Activated CD4-positive, alpha-beta T cell treated with anti-CD3 and anti-CD28 coated beads for 36 hours (primary cell): ENCODE measurements at regions of chr1 and their contacts with region 1.

Region 1: DNA sequence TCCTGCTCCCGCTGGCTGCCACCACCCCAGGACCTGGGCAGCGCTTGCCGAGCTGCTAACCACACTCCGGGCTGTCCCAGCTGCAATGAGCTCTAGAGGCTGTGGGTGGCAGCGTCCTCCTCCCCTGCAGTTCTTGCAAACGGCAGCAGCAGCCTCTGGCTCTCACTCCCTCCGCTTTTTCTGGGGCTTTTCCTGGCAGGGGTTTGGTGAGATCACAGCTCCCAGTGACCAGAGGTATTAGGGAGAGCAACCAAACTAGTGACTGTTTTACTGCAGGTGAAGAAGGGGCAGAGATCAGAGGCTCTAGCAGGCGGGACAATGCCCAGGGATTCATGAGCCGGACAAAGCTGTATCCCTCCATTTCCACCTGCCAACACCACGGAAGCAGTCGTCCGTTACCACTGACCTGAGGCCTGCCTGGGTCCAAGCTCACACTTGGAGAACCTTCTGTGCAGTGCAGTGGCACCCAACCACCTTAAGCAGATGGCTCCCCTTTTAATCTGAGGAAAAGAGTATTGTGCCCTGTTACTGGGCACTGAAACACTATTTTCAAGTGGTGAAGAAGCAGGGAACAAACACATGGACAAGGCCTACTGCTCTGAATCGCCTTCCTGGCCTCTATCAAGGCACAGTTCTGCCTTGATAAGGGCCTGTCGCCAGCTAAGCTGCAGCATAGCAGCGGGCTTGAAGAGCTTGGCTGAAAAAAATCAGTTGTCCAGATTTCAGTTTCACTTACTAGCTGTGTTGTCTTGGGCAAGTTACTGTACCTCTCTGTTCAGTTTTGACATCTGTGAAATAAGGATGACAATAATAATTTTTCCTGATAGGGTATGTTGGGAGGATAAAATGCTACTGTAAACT is at the start of gene F5:
- DNase-seq: peak; percentile 92
- ATAC-seq: peak; percentile 87
- H3K4me3 Mint-ChIP-seq: peak within 1 kb of the TSS; percentile 95
- H3K27ac Mint-ChIP-seq: peak within 1 kb of the TSS; percentile 97
- H3K4me1 Mint-ChIP-seq: peaks cover 65% of the 10 kb centered on the region
- H3K27me3 Mint-ChIP-seq: no peaks in the 10 kb centered on the region
- total RNA-seq, gene F5: 49.8 to 57.8 TPM

Region 2: DNA sequence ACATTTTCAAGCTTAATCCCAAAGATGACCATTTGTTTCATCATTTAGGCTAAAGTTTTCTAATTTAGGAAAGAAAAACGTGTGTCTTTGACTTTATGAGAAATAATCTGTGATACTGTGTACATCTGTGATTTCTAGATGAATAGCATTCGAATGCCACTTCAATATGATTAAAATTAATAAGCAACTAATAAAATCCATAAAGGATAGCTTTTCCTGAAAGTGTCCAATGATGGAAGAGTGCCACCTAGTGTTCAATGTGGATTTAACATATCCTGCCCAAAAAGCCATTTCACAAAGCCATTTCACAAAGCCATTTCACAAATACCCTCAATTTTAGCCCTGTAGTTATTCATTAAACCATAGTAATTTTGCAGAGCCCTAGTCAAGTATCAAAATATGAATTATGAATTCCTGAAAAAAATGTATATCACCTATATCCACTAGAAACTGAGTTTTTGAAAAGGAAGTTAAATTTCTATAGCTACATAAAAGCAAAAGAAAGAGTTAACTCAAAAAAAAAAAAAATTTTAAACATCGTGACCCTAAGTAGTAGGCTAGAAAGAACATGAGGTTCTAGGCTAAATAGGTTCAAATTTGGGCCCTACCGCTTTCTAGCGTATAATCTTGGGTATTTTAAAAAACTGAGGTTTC is 238.1 kb before region 1 on chr1:
- CTCF ChIA-PET with region 1: no interaction called
- POLR2A ChIA-PET with region 1: no interaction called
- intact Hi-C with region 1: no loop called
- DNase-seq: no peak
- ATAC-seq: no peak
- H3K4me3 Mint-ChIP-seq: no peak overlapping the region
- H3K27ac Mint-ChIP-seq: no peak overlapping the region
- H3K4me1 Mint-ChIP-seq: peaks cover 14% of the 10 kb centered on the region
- H3K27me3 Mint-ChIP-seq: no peaks in the 10 kb centered on the region

Region 3: GRCh38 chr1:169601093-169601881 is 14.7 kb after region 1 on chr1:
- CTCF ChIA-PET with region 1: interaction called, 46 read pairs
- POLR2A ChIA-PET with region 1: no interaction called
- intact Hi-C with region 1: loop called in 1 of 2 experiments (anchors 2 kb)
- DNase-seq: no peak
- ATAC-seq: peak; percentile 38
- H3K4me3 Mint-ChIP-seq: no peak overlapping the region
- H3K27ac Mint-ChIP-seq: peak overlapping the region; percentile 72
- H3K4me1 Mint-ChIP-seq: peaks cover 56% of the 10 kb centered on the region
- H3K27me3 Mint-ChIP-seq: no peaks in the 10 kb centered on the region

Region 4: DNA sequence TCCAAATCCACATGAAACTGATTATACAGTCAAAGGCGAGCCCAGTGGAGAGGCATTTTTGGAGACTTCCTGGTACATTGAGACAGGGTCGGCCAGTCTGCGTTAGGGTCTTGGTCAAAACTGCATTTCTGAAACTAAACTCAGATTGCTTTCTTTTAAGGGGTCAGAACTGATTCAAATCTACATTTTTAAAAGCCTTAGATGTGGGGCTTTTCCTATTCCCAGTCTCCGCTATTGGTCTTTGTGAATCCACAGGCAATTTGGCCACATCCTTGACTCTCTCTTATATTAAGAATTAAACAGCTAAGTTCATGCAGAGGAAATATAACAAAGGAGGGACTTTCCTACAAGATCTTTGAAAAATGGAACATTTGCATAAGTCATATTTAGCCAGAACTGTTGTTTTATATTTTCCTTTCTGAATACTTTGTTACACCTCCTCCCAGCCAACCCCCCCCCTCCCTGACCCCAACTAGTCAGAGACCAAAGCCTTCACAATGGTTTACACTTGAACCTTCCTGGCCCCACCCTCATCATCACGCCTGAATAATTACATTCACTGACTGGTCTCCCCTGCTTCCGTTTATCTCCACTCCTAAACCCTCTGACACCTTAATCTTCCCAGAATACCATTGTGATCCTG is 93.9 kb after region 1 on chr1:
- CTCF ChIA-PET with region 1: interaction called, 12 read pairs
- POLR2A ChIA-PET with region 1: no interaction called
- intact Hi-C with region 1: no loop called
- DNase-seq: peak; percentile 80
- ATAC-seq: peak; percentile 84
- H3K4me3 Mint-ChIP-seq: peak overlapping the region; percentile 57
- H3K27ac Mint-ChIP-seq: peak overlapping the region; percentile 95
- H3K4me1 Mint-ChIP-seq: peaks cover 64% of the 10 kb centered on the region
- H3K27me3 Mint-ChIP-seq: no peaks in the 10 kb centered on the region

Region 5: GRCh38 chr1:169694304-169695075 is 107.9 kb after region 1 on chr1:
- CTCF ChIA-PET with region 1: interaction called, 15 read pairs
- POLR2A ChIA-PET with region 1: interaction called, 6 read pairs
- intact Hi-C with region 1: loop called (anchors 1 kb)
- DNase-seq: peak; percentile 52
- ATAC-seq: peak; percentile 26
- H3K4me3 Mint-ChIP-seq: peak overlapping the region; percentile 39
- H3K27ac Mint-ChIP-seq: peak overlapping the region; percentile 95
- H3K4me1 Mint-ChIP-seq: peaks cover 97% of the 10 kb centered on the region
- H3K27me3 Mint-ChIP-seq: no peaks in the 10 kb centered on the region

Region 6: GRCh38 chr1:169701261-169702005 is 114.8 kb after region 1 on chr1:
- CTCF ChIA-PET with region 1: interaction called, 16 read pairs
- POLR2A ChIA-PET with region 1: no interaction called
- intact Hi-C with region 1: no loop called
- DNase-seq: no peak
- ATAC-seq: no peak
- H3K4me3 Mint-ChIP-seq: peak overlapping the region; percentile 45
- H3K27ac Mint-ChIP-seq: peak overlapping the region; percentile 85
- H3K4me1 Mint-ChIP-seq: peaks cover 98% of the 10 kb centered on the region
- H3K27me3 Mint-ChIP-seq: no peaks in the 10 kb centered on the region

Region 7: DNA sequence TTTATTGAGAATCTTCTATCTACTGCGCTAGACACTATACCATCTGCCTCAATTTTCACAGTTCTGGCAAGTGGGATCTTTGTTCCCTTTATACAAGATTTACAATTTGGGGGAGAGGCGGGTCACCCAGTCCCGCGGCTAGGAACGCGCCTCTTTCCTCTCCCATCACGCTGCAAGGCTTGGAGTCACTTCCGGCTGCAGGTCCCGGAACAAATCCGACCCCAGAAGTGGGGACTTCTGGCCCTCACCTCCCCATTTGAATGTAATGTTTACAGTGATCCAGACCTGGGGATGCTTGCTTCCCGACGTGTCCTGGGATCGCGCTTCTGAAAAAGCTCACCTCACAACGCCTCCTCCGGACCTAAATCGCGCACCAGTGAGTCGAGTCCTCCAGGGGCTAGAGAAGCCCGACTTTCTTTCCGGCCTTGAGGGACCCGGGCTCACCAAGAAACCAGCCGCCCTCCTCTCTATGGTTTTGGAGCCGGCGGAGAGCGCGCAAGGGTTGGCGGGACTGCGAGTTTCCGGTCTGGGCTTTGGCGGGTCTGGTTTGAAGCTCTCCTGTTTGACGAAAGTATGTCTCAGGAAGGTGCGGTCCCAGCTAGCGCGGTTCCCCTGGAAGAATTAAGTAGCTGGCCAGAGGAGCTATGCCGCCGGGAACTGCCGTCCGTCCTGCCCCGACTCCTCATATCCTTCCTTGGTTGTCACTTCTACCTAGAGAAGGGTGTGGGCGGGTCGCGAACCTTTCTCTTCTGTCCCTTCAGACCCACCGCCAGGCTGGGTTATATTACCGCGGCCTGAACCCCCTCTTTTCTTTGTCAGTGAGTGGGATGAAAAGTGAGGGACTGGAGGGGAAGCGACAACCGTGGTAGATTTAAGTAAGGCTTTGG is 208.1 kb after region 1 on chr1 and contains the start of gene METTL18:
- CTCF ChIA-PET with region 1: interaction called, 10 read pairs
- POLR2A ChIA-PET with region 1: interaction called, 4 read pairs
- intact Hi-C with region 1: loop called in 1 of 2 experiments (anchors 2 kb)
- DNase-seq: peak; percentile 96
- ATAC-seq: peak; percentile 98
- H3K4me3 Mint-ChIP-seq: peak within 1 kb of the TSS; percentile 96
- H3K27ac Mint-ChIP-seq: peak within 1 kb of the TSS; percentile 98
- H3K4me1 Mint-ChIP-seq: peaks cover 46% of the 10 kb centered on the region
- H3K27me3 Mint-ChIP-seq: no peaks in the 10 kb centered on the region
- total RNA-seq, gene METTL18: 11.6 to 13.3 TPM

Region 8: GRCh38 chr1:170067253-170067819 is 480.7 kb after region 1 on chr1:
- CTCF ChIA-PET with region 1: no interaction called
- POLR2A ChIA-PET with region 1: no interaction called
- intact Hi-C with region 1: loop called in 1 of 2 experiments (anchors 10 kb)
- DNase-seq: no peak
- ATAC-seq: peak; percentile 48
- H3K4me3 Mint-ChIP-seq: peak overlapping the region; percentile 15
- H3K27ac Mint-ChIP-seq: no peak overlapping the region
- H3K4me1 Mint-ChIP-seq: peaks cover 51% of the 10 kb centered on the region
- H3K27me3 Mint-ChIP-seq: no peaks in the 10 kb centered on the region

Region 9: DNA sequence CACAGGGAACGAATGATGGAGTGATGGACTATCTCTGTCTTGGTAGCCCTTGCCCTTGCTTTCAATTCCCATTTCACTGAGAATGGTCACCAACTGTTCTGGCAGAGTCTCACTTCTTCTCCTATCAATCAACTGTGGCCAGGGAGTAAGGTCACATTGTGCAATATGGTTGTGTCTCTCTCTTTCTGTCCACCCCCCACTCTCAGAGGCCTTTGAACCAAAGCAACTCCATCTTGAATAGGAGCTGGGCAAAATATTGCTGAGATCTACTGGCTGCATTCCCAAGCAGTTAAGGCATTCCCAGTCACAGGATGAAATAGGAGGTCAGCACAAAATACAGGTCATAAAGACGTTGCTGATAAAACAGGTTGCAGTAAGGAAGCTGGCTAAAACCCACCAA is 595.8 kb after region 1 on chr1:
- CTCF ChIA-PET with region 1: no interaction called
- POLR2A ChIA-PET with region 1: no interaction called
- intact Hi-C with region 1: no loop called
- DNase-seq: no peak
- ATAC-seq: no peak
- H3K4me3 Mint-ChIP-seq: no peak overlapping the region
- H3K27ac Mint-ChIP-seq: no peak overlapping the region
- H3K4me1 Mint-ChIP-seq: no peaks in the 10 kb centered on the region
- H3K27me3 Mint-ChIP-seq: peaks cover 4% of the 10 kb centered on the region